ENCODE measurements at regions of chr5 and their contacts with region 1.

Region 1: GRCh38 chr5:74482990-74483389 is 157.5 kb downstream of the ENC1 start:
- DNase-seq: no peak
- H3K4me3 ChIP-seq: peak overlapping the region in 10 of 59 donors; percentile 1 to 39 (median 10)
- H3K27ac ChIP-seq: no peak overlapping the region
- H3K27me3 ChIP-seq: no peaks in the 10 kb centered on the region
- CTCF ChIP-seq: no peak

Region 2: GRCh38 chr5:74625742-74626241 is 142.8 kb after region 1 on chr5:
- intact Hi-C with region 1: loop called in 1 of 2 experiments (anchors 10 kb)
- DNase-seq: no peak
- H3K4me3 ChIP-seq: no peak overlapping the region
- H3K27ac ChIP-seq: no peak overlapping the region
- H3K27me3 ChIP-seq: no peaks in the 10 kb centered on the region
- CTCF ChIP-seq: peak in 4 of 56 donors; percentile 10 to 17 (median 10)

Measured in dorsolateral prefrontal cortex (tissue), 120 donors.